ENCODE measurements at regions of chr7 and their contacts with region 1.

Region 1: GRCh38 chr7:148084138-148084537 is 506.4 kb upstream of the C7orf33 start:
- DNase-seq: peak in 2 of 3 donors; percentile 26 to 72
- ATAC-seq: peak; percentile 26
- H3K4me3 ChIP-seq: no peak overlapping the region
- H3K4me1 ChIP-seq: no peaks in the 10 kb centered on the region
- CTCF ChIP-seq: no peak

Region 2: DNA sequence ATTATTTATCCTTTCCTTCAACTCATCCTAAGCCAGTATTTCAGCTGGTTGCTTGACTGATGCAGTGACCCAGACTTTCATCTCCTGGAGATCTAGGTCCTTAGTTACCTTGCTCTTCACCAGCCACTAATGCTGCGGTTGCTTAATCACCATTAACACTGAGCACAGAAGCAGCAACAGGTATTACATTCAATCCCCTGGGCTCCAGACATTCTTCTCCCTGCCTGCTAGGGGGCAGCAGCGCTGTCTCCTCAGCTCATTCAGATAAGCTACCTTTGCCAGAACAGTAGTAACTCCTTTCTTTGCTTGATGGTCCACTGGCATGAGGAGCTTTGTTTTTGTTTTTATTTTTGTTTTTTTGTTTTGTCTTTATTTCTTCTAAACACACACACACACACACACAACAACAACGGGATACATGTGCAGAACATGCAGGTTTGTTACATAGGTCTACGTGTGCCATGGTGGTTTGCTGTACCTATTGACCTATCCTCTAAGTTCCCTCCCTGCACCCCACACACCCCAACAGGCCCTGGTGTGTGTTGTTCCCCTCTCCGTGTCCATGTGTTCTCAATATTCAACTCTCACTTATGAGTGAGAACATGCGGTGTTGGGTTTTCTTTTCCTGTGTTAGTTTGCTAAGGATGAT is 536.8 kb before region 1 on chr7:
- intact Hi-C with region 1: loop called in 1 of 2 experiments (anchors 10 kb)
- DNase-seq: peak in 2 of 3 donors; percentile 31 to 42
- ATAC-seq: peak; percentile 65
- H3K4me3 ChIP-seq: no peak overlapping the region
- H3K4me1 ChIP-seq: no peaks in the 10 kb centered on the region
- CTCF ChIP-seq: no peak